PC-9 (cell line): ENCODE measurements at regions of chr9 and their contacts with region 1.

Region 1: DNA sequence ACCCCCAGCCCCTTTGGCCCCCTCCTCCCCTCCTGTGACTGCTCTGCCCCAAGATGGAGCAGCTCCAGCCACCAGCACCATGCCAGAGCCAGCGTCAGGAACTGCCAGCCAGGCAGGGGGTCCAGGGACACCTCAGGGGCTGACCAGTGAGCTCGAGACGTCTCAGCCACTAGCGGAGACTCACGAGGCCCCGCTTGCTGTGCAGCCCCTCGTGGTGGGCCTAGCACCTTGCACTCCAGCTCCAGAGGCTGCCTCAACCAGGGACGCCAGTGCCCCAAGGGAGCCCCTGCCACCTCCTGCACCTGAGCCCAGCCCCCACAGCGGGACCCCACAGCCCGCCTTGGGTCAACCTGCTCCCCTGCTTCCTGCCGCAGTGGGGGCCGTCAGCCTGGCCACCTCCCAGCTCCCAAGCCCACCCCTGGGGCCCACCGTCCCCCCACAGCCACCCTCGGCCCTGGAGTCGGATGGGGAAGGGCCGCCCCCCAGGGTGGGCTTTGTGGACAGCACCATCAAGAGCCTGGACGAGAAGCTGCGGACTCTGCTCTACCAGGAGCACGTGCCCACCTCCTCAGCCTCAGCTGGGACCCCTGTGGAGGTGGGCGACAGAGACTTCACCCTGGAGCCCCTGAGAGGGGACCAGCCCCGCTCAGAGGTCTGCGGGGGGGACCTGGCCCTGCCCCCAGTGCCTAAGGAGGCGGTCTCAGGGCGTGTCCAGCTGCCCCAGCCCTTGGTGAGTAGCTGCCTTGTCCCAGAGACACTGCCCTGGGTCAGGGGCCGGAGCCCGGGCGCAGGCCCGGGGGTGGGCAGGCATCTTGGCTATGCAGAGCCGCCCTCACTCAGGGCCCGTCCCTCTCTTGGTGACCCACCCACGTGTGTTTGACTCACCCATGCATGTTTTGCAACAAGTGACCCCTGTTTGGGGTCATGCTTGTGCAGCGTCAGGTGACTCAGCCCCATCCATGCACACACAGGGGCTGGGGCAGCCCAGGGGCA is 105.2 kb downstream of the WNK2 start:
- DNase-seq: peak; percentile 79 to 85
- H3K4me3 ChIP-seq: no peak overlapping the region
- H3K27ac ChIP-seq: peak overlapping the region; percentile 29; the same call in 1 of the 2 replicates
- H3K4me1 ChIP-seq: peaks cover 21% of the 10 kb centered on the region
- H3K27me3 ChIP-seq: no peaks in the 10 kb centered on the region
- CTCF ChIP-seq: no peak

Region 2: GRCh38 chr9:92974151-92974710 is 315.0 kb before region 1 on chr9:
- CTCF ChIA-PET with region 1: no interaction called
- POLR2A ChIA-PET with region 1: no interaction called
- intact Hi-C with region 1: no loop called
- DNase-seq: peak; percentile 98 to 99
- H3K4me3 ChIP-seq: peak overlapping the region; percentile 54
- H3K27ac ChIP-seq: peak overlapping the region; percentile 99
- H3K4me1 ChIP-seq: peaks cover 86% of the 10 kb centered on the region
- H3K27me3 ChIP-seq: no peaks in the 10 kb centered on the region
- CTCF ChIP-seq: no peak

Region 3: DNA sequence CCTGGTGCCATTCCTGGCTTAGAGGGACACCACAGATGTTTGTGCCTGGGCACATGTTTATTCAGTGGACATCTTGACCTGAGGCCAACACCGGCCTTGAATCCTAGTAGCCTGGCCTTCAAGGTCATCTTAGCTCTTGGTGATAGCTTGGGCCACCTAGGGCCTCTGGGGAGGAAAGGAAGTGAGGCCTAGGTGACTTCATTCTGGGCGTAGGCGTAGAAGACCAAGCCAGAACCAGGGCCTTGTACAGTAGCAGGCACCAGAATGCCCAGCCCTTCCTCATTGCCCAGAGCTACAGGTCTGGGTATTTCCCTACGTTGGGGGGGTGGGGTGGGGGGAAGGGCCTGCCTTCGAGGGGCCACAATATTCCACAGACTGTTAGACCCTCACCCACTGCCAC is 71.5 kb before region 1 on chr9:
- CTCF ChIA-PET with region 1: no interaction called
- POLR2A ChIA-PET with region 1: no interaction called
- intact Hi-C with region 1: loop called (anchors 2 kb)
- DNase-seq: peak in 1 of 2 experiments; percentile 65
- H3K4me3 ChIP-seq: no peak overlapping the region
- H3K27ac ChIP-seq: no peak overlapping the region
- H3K4me1 ChIP-seq: peaks cover 17% of the 10 kb centered on the region
- H3K27me3 ChIP-seq: no peaks in the 10 kb centered on the region
- CTCF ChIP-seq: no peak

Region 4: DNA sequence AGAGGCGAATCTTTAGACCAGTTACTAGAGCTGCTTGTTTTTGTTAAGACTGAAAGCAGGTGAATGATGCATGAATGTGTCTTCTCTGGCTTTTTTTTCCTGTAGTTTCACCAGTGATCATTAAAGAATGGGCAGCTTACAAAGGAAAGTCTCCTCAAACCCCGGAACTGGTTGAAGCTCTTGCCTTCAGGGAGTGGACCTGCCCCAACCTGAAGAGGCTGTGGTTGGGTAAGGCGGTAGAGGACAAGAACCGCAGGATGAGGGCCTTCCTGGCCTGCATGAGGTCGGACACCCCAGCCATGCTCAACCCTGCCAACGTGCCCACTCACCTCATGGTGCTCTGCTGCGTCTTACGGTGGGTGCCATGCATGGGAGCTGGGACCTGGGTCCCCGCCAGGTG is 253.9 kb after region 1 on chr9:
- CTCF ChIA-PET with region 1: no interaction called
- POLR2A ChIA-PET with region 1: interaction called, 18 read pairs
- intact Hi-C with region 1: no loop called
- DNase-seq: no peak
- H3K4me3 ChIP-seq: no peak overlapping the region
- H3K27ac ChIP-seq: no peak overlapping the region
- H3K4me1 ChIP-seq: no peaks in the 10 kb centered on the region
- H3K27me3 ChIP-seq: no peaks in the 10 kb centered on the region
- CTCF ChIP-seq: no peak